Activated CD4-positive, alpha-beta T cell treated with anti-CD3 and anti-CD28 coated beads for 36 hours (primary cell): ENCODE measurements at regions of chr17 and their contacts with region 1.

Region 1: DNA sequence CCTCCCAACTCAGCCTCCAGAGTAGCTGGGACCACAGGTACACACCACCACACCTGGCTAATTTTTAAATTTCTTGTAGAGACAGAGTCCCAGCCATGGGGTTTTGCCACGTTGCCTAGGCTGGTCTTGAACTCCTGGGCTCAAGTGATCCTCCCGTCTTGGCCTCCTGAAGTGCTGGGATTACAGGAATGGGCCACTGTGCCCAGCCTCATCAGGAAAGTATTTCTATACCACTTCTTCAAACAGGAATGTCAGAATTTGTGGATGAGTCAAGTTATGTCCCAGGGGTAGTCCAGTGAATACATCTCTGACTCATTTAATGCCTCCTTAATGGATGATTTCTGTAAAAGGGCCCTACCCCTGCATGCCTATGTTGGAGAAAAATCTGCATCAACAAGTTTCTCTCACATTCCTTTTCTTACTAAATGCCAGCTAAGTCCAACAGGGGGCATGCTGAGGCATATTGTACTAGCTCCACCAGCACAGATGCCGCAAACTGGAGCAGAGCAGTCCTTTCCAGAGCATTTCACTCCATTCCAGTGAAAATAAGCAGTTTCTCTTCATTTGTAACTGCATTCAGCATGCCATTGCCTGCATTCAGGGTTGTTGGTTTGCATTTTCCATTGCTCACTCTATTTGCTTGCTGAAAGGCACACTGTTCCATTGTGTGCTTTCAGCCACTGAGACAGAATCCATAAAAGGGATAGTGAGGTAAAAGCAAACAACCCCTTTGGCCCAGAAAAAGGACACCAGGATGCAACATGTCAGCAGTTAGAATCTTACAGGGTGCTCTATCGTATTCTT is 5.3 kb upstream of the CAVIN1 start:
- DNase-seq: peak; percentile 58
- ATAC-seq: peak; percentile 81
- H3K4me3 Mint-ChIP-seq: no peak overlapping the region
- H3K27ac Mint-ChIP-seq: no peak overlapping the region
- H3K4me1 Mint-ChIP-seq: no peaks in the 10 kb centered on the region
- H3K27me3 Mint-ChIP-seq: peaks cover 14% of the 10 kb centered on the region

Region 2: DNA sequence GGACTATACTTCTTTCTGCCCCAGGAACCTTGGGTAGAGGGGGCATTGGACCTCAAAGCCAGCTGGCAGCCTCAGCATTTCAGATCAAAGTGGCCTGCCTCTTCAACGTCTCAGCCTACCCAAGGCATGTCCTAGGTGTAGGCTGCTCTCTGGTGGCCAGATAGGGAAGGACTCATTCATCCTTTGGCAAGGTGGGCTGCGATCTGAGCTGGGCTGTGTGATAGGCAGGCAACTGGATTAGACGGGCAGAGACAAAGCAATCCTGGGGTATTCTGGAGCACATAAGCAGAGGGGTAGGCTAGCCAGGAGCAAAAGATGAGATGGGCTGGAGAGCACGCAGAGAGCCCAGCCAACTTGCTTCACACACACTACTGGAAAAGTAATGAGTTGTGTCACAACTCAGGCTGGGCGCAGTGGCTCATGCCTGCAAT is 98.9 kb after region 1 on chr17:
- CTCF ChIA-PET with region 1: interaction called, 5 read pairs
- POLR2A ChIA-PET with region 1: no interaction called
- intact Hi-C with region 1: loop called in 1 of 2 experiments (anchors 1 kb)
- DNase-seq: peak; percentile 82
- ATAC-seq: peak; percentile 82
- H3K4me3 Mint-ChIP-seq: no peak overlapping the region
- H3K27ac Mint-ChIP-seq: no peak overlapping the region
- H3K4me1 Mint-ChIP-seq: peaks cover 37% of the 10 kb centered on the region
- H3K27me3 Mint-ChIP-seq: no peaks in the 10 kb centered on the region